OCI-LY7 (cell line): ENCODE measurements at regions of chr3 and their contacts with region 1.

Region 1: DNA sequence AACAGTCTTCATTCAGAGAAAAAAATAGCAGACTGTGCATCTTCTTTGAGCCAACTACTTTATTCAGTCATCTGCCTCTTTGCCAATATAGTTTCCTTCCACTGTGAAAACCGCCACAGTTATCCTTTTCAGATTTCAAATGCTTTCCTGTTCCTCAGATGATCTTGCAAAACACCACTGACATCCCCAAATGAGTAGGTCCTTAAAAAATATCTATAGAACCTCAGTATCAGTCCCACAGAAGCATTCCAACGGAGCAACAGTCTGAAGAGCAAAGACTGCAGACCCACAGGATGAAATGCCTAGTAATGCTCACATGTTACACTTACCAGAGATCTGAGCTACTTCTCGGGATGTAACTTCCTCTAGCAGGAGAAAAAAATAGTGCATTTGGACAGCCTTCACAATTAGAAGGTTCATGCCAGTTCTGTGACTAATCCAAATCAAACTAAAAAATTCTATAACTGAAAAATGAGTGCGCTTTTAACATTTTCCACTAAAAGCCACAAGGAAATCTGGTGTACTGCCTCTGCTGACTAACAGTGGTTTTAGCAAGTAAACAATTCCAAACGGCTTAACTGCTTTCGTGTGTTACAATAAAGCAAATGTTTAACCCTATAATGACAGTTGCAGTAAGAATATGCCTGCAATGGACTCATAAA is at the start of gene ANKRD28:
- DNase-seq: peak; percentile 37
- H3K4me3 ChIP-seq: peak within 1 kb of the TSS; percentile 19
- H3K27ac ChIP-seq: peak within 1 kb of the TSS; percentile 15
- H3K4me1 ChIP-seq: peaks cover 37% of the 10 kb centered on the region
- CTCF ChIP-seq: peak; percentile 53; the same call in 1 of the 2 replicates
- total RNA-seq, gene ANKRD28: 52.9 and 69.0 TPM in 2 replicates

Region 2: DNA sequence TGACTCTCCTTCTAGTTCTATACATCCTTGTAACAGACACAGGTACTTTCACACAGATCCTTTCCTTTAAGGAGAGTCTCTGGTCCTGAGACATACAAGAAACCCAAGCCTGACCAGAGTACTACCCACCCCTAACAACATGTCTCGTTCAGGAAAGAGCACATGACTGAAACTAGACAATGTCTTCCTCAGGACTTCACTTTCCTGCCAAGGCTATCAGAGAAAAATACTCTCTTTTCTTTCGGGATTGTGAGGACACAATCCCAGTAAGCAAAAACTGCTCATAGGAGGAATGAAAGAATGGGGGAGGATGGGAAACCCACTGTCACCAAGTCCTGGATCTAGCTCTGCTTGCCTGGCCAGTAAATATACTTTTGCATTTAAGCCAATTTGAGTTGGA is 11.5 kb after region 1 on chr3:
- CTCF ChIA-PET with region 1: interaction called, 3 read pairs
- POLR2A ChIA-PET with region 1: interaction called, 17 read pairs
- intact Hi-C with region 1: no loop called
- DNase-seq: no peak
- H3K4me3 ChIP-seq: no peak overlapping the region
- H3K27ac ChIP-seq: no peak overlapping the region
- H3K4me1 ChIP-seq: peaks cover 15% of the 10 kb centered on the region
- CTCF ChIP-seq: no peak